Gastrocnemius medialis (tissue), 4 donors: ENCODE measurements at regions of chrX and their contacts with region 1.

Region 1: GRCh38 chrX:56729152-56729850 is at the start of gene NBDY:
- DNase-seq: no peak
- ATAC-seq: peak; percentile 54 to 66
- H3K4me3 ChIP-seq: peak within 1 kb of the TSS; percentile 57 to 67 (median 62)
- H3K27ac ChIP-seq: peak within 1 kb of the TSS; percentile 58 to 73 (median 69)
- H3K4me1 ChIP-seq: no peaks in the 10 kb centered on the region
- H3K27me3 ChIP-seq: no peaks in the 10 kb centered on the region
- CTCF ChIP-seq: no peak
- POLR2A ChIP-seq: peak; percentile 33 to 45
- total RNA-seq, gene NBDY: 3.7 to 9.8 (median 5.9) TPM

Region 2: GRCh38 chrX:55717521-55718497 is 1011.5 kb before region 1 on chrX and contains the start of gene RRAGB:
- in situ Hi-C with region 1: loop called in 1 of 4 experiments (anchors 25 kb)
- intact Hi-C with region 1: no loop called
- DNase-seq: peak; percentile 90 to 96
- ATAC-seq: peak; percentile 96 to 97
- H3K4me3 ChIP-seq: peak within 1 kb of the TSS; percentile 66 to 77 (median 74)
- H3K27ac ChIP-seq: peak within 1 kb of the TSS; percentile 83 to 93 (median 90)
- H3K4me1 ChIP-seq: peaks cover 5 to 12% of the 10 kb centered on the region in 2 donors
- H3K27me3 ChIP-seq: no peaks in the 10 kb centered on the region
- CTCF ChIP-seq: peak; percentile 54 to 67 (median 56)
- POLR2A ChIP-seq: peak; percentile 36 to 49
- total RNA-seq, gene RRAGB: 2.8 to 20.9 (median 7.4) TPM

Region 3: GRCh38 chrX:56232221-56233082 is 496.8 kb before region 1 on chrX and contains the start of gene KLF8:
- in situ Hi-C with region 1: loop called in 1 of 4 experiments (anchors 25 kb)
- intact Hi-C with region 1: loop called (anchors 5 kb)
- DNase-seq: peak; percentile 22 to 48
- ATAC-seq: peak; percentile 74 to 78
- H3K4me3 ChIP-seq: peak within 1 kb of the TSS; percentile 51 to 61 (median 60)
- H3K27ac ChIP-seq: peak within 1 kb of the TSS; percentile 76 to 80 (median 78)
- H3K4me1 ChIP-seq: peaks cover 0 to 3% of the 10 kb centered on the region in 2 donors
- H3K27me3 ChIP-seq: peaks cover 0 to 6% (median 0%) of the 10 kb centered on the region in 3 donors
- CTCF ChIP-seq: no peak
- POLR2A ChIP-seq: peak; percentile 27 to 32
- total RNA-seq, gene KLF8: 0.70 to 4.2 (median 3.3) TPM

Region 4: DNA sequence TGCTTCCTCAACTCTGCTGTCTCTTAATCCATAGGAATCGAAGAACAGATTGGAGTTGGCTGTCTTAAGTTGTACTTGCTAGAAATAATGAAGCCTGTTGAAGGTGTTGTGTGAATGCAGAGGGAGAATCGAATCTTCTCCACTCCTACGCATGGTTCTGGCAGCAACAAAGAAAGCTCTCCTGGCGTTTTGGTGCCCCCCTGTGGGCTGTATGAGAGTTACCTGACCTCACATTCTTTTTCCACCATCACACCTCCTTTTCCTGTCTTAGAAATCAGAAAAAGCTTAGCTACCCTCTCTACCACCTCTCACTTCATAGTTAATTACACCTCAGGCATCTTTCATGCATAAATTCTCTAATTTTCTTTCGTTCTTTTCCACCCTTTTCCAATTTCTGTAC is 480.8 kb before region 1 on chrX:
- in situ Hi-C with region 1: loop called in 1 of 4 experiments (anchors 25 kb)
- intact Hi-C with region 1: no loop called
- DNase-seq: no peak
- ATAC-seq: no peak
- H3K4me3 ChIP-seq: no peak overlapping the region
- H3K27ac ChIP-seq: no peak overlapping the region
- H3K4me1 ChIP-seq: no peaks in the 10 kb centered on the region
- H3K27me3 ChIP-seq: no peaks in the 10 kb centered on the region
- CTCF ChIP-seq: peak; percentile 32 to 59 (median 50)
- POLR2A ChIP-seq: no peak

Region 5: GRCh38 chrX:56281789-56282188 is 447.5 kb before region 1 on chrX:
- in situ Hi-C with region 1: loop called in 1 of 4 experiments (anchors 25 kb)
- intact Hi-C with region 1: no loop called
- DNase-seq: no peak
- ATAC-seq: no peak
- H3K4me3 ChIP-seq: no peak overlapping the region
- H3K27ac ChIP-seq: no peak overlapping the region
- H3K4me1 ChIP-seq: no peaks in the 10 kb centered on the region
- H3K27me3 ChIP-seq: no peaks in the 10 kb centered on the region
- CTCF ChIP-seq: no peak
- POLR2A ChIP-seq: no peak

Region 6: GRCh38 chrX:56462389-56462788 is 266.9 kb before region 1 on chrX:
- in situ Hi-C with region 1: loop called in 1 of 4 experiments (anchors 25 kb)
- intact Hi-C with region 1: no loop called
- DNase-seq: no peak
- ATAC-seq: no peak
- H3K4me3 ChIP-seq: no peak overlapping the region
- H3K27ac ChIP-seq: no peak overlapping the region
- H3K4me1 ChIP-seq: no peaks in the 10 kb centered on the region
- H3K27me3 ChIP-seq: no peaks in the 10 kb centered on the region
- CTCF ChIP-seq: no peak
- POLR2A ChIP-seq: no peak

Region 7: GRCh38 chrX:56563231-56564161 is 165.8 kb before region 1 on chrX and contains the start of gene UBQLN2:
- in situ Hi-C with region 1: loop called in 1 of 4 experiments (anchors 25 kb)
- intact Hi-C with region 1: loop called (anchors 5 kb)
- DNase-seq: peak; percentile 70 to 74
- ATAC-seq: peak; percentile 85 to 91
- H3K4me3 ChIP-seq: peak within 1 kb of the TSS; percentile 66 to 83 (median 80)
- H3K27ac ChIP-seq: peak within 1 kb of the TSS; percentile 90 to 98 (median 94)
- H3K4me1 ChIP-seq: peaks cover 20 to 25% of the 10 kb centered on the region in 2 donors
- H3K27me3 ChIP-seq: no peaks in the 10 kb centered on the region
- CTCF ChIP-seq: peak in 3 of 5 experiments; percentile 3 to 37 (median 20)
- POLR2A ChIP-seq: peak; percentile 76 to 78
- total RNA-seq, gene UBQLN2: 21.6 to 31.1 (median 25.4) TPM